ENCODE measurements at regions of chr4 and their contacts with region 1.

Region 1: GRCh38 chr4:55887594-55887993 is 34.1 kb downstream of the EXOC1 start:
- DNase-seq: no peak
- ATAC-seq: no peak
- H3K4me3 ChIP-seq: no peak overlapping the region
- H3K4me3 Mint-ChIP-seq: no peak overlapping the region
- H3K27ac ChIP-seq: no peak overlapping the region
- H3K27ac Mint-ChIP-seq: peak overlapping the region in 5 of 9 donors; percentile 47 to 83 (median 57)
- H3K4me1 ChIP-seq: no peaks in the 10 kb centered on the region
- H3K4me1 Mint-ChIP-seq: peaks cover 6 to 52% (median 29%) of the 10 kb centered on the region in 7 donors
- H3K27me3 ChIP-seq: no peaks in the 10 kb centered on the region
- H3K27me3 Mint-ChIP-seq: no peaks in the 10 kb centered on the region

Region 2: GRCh38 chr4:55491486-55491885 is 396.1 kb before region 1 on chr4:
- CTCF ChIA-PET with region 1: no interaction called
- POLR2A ChIA-PET with region 1: no interaction called
- intact Hi-C with region 1: no loop called
- DNase-seq: no peak
- ATAC-seq: no peak
- H3K4me3 ChIP-seq: no peak overlapping the region
- H3K4me3 Mint-ChIP-seq: no peak overlapping the region
- H3K27ac ChIP-seq: no peak overlapping the region
- H3K27ac Mint-ChIP-seq: no peak overlapping the region
- H3K4me1 ChIP-seq: no peaks in the 10 kb centered on the region
- H3K4me1 Mint-ChIP-seq: peaks cover 0 to 23% (median 15%) of the 10 kb centered on the region in 7 donors
- H3K27me3 ChIP-seq: no peaks in the 10 kb centered on the region
- H3K27me3 Mint-ChIP-seq: no peaks in the 10 kb centered on the region

Region 3: GRCh38 chr4:55906999-55907398 is 19.4 kb after region 1 on chr4:
- CTCF ChIA-PET with region 1: no interaction called
- POLR2A ChIA-PET with region 1: no interaction called
- intact Hi-C with region 1: loop called in 1 of 2 experiments (anchors 2 kb)
- DNase-seq: peak in 1 of 9 donors; percentile 6
- ATAC-seq: no peak
- H3K4me3 ChIP-seq: no peak overlapping the region
- H3K4me3 Mint-ChIP-seq: peak overlapping the region in 9 of 10 donors; percentile 6 to 69 (median 52)
- H3K27ac ChIP-seq: no peak overlapping the region
- H3K27ac Mint-ChIP-seq: peak overlapping the region in 8 of 9 donors; percentile 14 to 82 (median 62)
- H3K4me1 ChIP-seq: no peaks in the 10 kb centered on the region
- H3K4me1 Mint-ChIP-seq: peaks cover 11 to 31% (median 25%) of the 10 kb centered on the region in 7 donors
- H3K27me3 ChIP-seq: no peaks in the 10 kb centered on the region
- H3K27me3 Mint-ChIP-seq: no peaks in the 10 kb centered on the region

Measured in naive thymus-derived CD4-positive, alpha-beta T cell (primary cell).